Activated CD8-positive, alpha-beta T cell treated with anti-CD3 and anti-CD28 coated beads, Interleukin-2, amount 10 ng/mL, durations not matched to agents 7 days and 5 days (primary cell): ENCODE measurements at regions of chr6 and their contacts with region 1.

Region 1: GRCh38 chr6:5143634-5144311 is 58.6 kb downstream of the PPP1R3G start:
- DNase-seq: peak; percentile 89
- ATAC-seq: peak; percentile 81
- H3K4me3 Mint-ChIP-seq: no peak overlapping the region
- H3K27ac Mint-ChIP-seq: no peak overlapping the region
- H3K4me1 Mint-ChIP-seq: peaks cover 2% of the 10 kb centered on the region
- H3K27me3 Mint-ChIP-seq: no peaks in the 10 kb centered on the region

Region 2: GRCh38 chr6:4994741-4995140 is 149.0 kb before region 1 on chr6:
- CTCF ChIA-PET with region 1: no interaction called
- POLR2A ChIA-PET with region 1: no interaction called
- DNase-seq: no peak
- ATAC-seq: no peak
- H3K4me3 Mint-ChIP-seq: no peak overlapping the region
- H3K27ac Mint-ChIP-seq: no peak overlapping the region
- H3K4me1 Mint-ChIP-seq: no peaks in the 10 kb centered on the region
- H3K27me3 Mint-ChIP-seq: no peaks in the 10 kb centered on the region

Region 3: GRCh38 chr6:5174244-5174643 is 30.5 kb after region 1 on chr6:
- CTCF ChIA-PET with region 1: interaction called, 59 read pairs
- POLR2A ChIA-PET with region 1: interaction called, 3 read pairs
- DNase-seq: peak; percentile 88
- ATAC-seq: peak; percentile 95
- H3K4me3 Mint-ChIP-seq: peak overlapping the region; percentile 72
- H3K27ac Mint-ChIP-seq: peak overlapping the region; percentile 98
- H3K4me1 Mint-ChIP-seq: peaks cover 59% of the 10 kb centered on the region
- H3K27me3 Mint-ChIP-seq: no peaks in the 10 kb centered on the region

Region 4: GRCh38 chr6:5205877-5206850 is 62.4 kb after region 1 on chr6:
- CTCF ChIA-PET with region 1: interaction called, 18 read pairs
- POLR2A ChIA-PET with region 1: no interaction called
- DNase-seq: no peak
- ATAC-seq: no peak
- H3K4me3 Mint-ChIP-seq: no peak overlapping the region
- H3K27ac Mint-ChIP-seq: no peak overlapping the region
- H3K4me1 Mint-ChIP-seq: no peaks in the 10 kb centered on the region
- H3K27me3 Mint-ChIP-seq: no peaks in the 10 kb centered on the region

Region 5: GRCh38 chr6:5246141-5247097 is 102.6 kb after region 1 on chr6:
- CTCF ChIA-PET with region 1: interaction called, 21 read pairs
- POLR2A ChIA-PET with region 1: no interaction called
- DNase-seq: no peak
- ATAC-seq: no peak
- H3K4me3 Mint-ChIP-seq: no peak overlapping the region
- H3K27ac Mint-ChIP-seq: no peak overlapping the region
- H3K4me1 Mint-ChIP-seq: no peaks in the 10 kb centered on the region
- H3K27me3 Mint-ChIP-seq: no peaks in the 10 kb centered on the region

Region 6: GRCh38 chr6:5302995-5303622 is 159.3 kb after region 1 on chr6:
- CTCF ChIA-PET with region 1: interaction called, 87 read pairs
- POLR2A ChIA-PET with region 1: no interaction called
- DNase-seq: peak; percentile 66
- ATAC-seq: peak; percentile 83
- H3K4me3 Mint-ChIP-seq: no peak overlapping the region
- H3K27ac Mint-ChIP-seq: peak overlapping the region; percentile 20
- H3K4me1 Mint-ChIP-seq: peaks cover 26% of the 10 kb centered on the region
- H3K27me3 Mint-ChIP-seq: no peaks in the 10 kb centered on the region